MCF 10A (cell line): ENCODE measurements at regions of chr13 and their contacts with region 1.

Region 1: DNA sequence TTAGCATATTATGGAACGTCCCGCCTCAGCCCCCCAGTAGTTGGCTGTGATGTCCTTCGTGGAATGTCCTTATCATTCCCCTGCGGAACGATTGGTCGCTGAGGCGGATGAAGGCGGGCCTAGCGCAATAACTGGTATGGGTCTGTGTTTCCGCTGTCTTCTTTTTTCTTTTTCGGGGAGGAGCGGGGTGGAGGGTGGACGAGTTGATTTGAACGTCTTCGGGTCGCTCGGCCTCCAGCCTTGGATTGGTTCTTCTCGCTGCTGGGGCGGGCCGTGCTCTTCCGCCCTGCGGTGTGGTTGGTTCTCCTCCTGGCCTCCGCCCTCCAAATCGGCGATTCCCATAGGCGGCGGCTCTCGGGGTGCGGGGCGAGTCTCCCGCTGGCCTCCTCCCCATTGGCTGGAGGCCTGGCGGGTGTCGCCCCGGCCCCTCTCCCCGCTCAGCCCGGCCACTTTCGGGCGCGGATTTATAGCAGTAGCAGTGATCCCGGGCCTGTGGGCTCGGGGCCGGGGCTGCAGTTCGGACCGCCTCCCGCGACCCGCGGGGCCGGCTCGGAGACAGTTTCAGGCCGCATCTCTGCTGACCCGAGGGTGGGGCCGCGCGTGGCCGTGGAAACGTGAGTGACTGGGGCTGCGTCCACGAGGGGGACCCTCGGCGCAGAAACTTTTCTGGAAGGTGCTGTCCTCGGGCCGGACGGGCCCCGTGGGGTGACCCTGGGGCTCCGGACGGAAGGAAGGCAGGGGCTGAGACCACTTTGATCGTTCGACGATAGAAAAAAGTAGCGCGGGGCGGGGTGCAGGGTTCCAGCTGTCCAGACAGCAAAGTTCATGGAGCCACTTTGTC is 2.1 kb downstream of the ING1 start:
- DNase-seq: peak; percentile 100
- H3K4me3 Mint-ChIP-seq: peak overlapping the region; percentile 92
- H3K27ac Mint-ChIP-seq: peak overlapping the region; percentile 91
- H3K4me1 Mint-ChIP-seq: no peaks in the 10 kb centered on the region
- H3K27me3 Mint-ChIP-seq: no peaks in the 10 kb centered on the region
- CTCF ChIP-seq: peak; percentile 18

Region 2: GRCh38 chr13:109383670-109384069 is 1331.9 kb before region 1 on chr13:
- CTCF ChIA-PET with region 1: no interaction called
- POLR2A ChIA-PET with region 1: no interaction called
- intact Hi-C with region 1: no loop called
- DNase-seq: peak; percentile 82
- H3K4me3 Mint-ChIP-seq: no peak overlapping the region
- H3K27ac Mint-ChIP-seq: peak overlapping the region; percentile 85
- H3K4me1 Mint-ChIP-seq: peaks cover 26% of the 10 kb centered on the region
- H3K27me3 Mint-ChIP-seq: no peaks in the 10 kb centered on the region
- CTCF ChIP-seq: no peak

Region 3: DNA sequence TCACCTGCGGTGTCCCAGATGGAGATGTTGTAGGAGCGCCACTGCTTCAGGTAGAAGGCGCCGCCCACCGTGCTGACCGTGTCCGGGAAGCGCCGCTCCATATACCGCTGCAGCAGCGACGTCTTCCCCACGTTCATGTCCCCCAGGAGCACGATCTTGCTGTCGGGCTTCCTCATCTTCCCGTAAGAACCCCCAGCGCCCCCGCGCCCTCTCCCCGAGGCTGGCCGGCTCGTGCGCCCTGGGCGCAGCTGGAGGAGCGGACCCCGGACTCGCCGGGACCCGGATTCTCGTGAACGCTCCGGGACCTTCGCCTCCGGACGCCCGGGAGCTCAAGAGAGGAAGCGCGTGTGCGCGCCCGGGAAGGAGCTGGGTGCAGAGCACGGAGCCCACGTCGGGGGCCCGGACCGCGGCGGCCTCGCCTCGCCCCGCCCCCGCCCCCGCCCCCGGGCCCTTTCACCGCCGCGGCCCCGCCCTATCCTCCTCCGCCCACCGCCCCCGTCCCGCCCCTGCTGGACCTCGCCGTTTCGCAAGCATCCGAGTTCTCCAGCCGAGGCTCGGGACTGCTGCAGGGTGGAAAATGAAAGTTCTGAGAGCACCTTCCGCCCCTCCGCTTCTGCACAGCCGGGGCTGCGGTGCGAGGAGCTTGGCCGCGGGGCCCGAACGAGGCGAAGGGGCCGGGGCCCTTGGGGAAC is 154.1 kb before region 1 on chr13 and contains the start of gene RAB20:
- CTCF ChIA-PET with region 1: no interaction called
- POLR2A ChIA-PET with region 1: interaction called, 17 read pairs
- intact Hi-C with region 1: no loop called
- DNase-seq: peak; percentile 87
- H3K4me3 Mint-ChIP-seq: peak within 1 kb of the TSS; percentile 88
- H3K27ac Mint-ChIP-seq: peak within 1 kb of the TSS; percentile 33
- H3K4me1 Mint-ChIP-seq: peaks cover 13% of the 10 kb centered on the region
- H3K27me3 Mint-ChIP-seq: no peaks in the 10 kb centered on the region
- CTCF ChIP-seq: no peak
- total RNA-seq, gene RAB20: 1.7 and 2.8 TPM in 2 replicates

Region 4: GRCh38 chr13:110615322-110616102 is 100.1 kb before region 1 on chr13 and contains the start of gene NAXD:
- CTCF ChIA-PET with region 1: interaction called, 3 read pairs
- POLR2A ChIA-PET with region 1: interaction called, 47 read pairs
- intact Hi-C with region 1: loop called (anchors 1 kb)
- DNase-seq: peak; percentile 96
- H3K4me3 Mint-ChIP-seq: peak within 1 kb of the TSS; percentile 82
- H3K27ac Mint-ChIP-seq: peak within 1 kb of the TSS; percentile 94
- H3K4me1 Mint-ChIP-seq: peaks cover 18% of the 10 kb centered on the region
- H3K27me3 Mint-ChIP-seq: no peaks in the 10 kb centered on the region
- CTCF ChIP-seq: no peak
- total RNA-seq, gene NAXD: 27.7 and 28.3 TPM in 2 replicates

Region 5: DNA sequence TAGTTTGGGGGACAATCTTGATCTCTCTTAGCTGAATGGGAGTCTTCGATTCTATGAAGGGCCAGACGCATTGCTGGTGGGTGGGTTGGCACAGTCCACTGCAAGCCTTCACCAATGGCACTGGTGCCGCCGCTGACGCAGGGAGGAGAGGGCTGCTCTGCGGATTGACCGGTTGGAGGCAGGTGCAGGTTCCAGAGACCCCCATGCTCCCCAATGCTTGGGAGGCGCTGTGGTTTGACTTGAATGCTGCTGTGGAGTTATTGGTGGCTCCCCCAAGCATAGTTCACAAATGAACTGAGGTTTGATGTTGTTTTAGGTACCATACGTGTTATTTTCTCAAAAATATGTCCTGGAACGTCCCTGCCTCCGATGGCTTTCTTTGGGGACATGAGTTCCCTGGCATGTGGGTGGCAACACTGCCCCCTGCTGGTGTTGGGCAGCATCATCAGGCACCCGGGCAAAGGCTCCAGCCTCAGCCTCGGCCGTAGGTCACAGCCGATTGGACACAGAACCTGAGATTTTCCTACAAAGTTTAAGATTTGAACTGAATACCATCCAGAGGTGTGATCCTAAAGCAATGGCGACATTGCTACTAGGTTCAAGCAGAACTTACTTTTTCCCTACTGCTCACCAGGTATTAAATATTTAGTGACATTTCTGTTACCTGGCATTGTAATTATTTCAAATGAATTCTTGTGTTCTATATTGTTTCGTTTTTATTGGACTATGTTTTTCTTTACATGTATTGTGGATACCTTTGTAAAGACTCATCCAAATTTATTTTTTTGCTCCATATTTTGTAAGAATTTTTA is 103.8 kb after region 1 on chr13:
- CTCF ChIA-PET with region 1: interaction called, 5 read pairs
- POLR2A ChIA-PET with region 1: interaction called, 15 read pairs
- intact Hi-C with region 1: loop called (anchors 1 kb)
- DNase-seq: peak; percentile 78
- H3K4me3 Mint-ChIP-seq: no peak overlapping the region
- H3K27ac Mint-ChIP-seq: no peak overlapping the region
- H3K4me1 Mint-ChIP-seq: peaks cover 5% of the 10 kb centered on the region
- H3K27me3 Mint-ChIP-seq: no peaks in the 10 kb centered on the region
- CTCF ChIP-seq: peak; percentile 92

Region 6: DNA sequence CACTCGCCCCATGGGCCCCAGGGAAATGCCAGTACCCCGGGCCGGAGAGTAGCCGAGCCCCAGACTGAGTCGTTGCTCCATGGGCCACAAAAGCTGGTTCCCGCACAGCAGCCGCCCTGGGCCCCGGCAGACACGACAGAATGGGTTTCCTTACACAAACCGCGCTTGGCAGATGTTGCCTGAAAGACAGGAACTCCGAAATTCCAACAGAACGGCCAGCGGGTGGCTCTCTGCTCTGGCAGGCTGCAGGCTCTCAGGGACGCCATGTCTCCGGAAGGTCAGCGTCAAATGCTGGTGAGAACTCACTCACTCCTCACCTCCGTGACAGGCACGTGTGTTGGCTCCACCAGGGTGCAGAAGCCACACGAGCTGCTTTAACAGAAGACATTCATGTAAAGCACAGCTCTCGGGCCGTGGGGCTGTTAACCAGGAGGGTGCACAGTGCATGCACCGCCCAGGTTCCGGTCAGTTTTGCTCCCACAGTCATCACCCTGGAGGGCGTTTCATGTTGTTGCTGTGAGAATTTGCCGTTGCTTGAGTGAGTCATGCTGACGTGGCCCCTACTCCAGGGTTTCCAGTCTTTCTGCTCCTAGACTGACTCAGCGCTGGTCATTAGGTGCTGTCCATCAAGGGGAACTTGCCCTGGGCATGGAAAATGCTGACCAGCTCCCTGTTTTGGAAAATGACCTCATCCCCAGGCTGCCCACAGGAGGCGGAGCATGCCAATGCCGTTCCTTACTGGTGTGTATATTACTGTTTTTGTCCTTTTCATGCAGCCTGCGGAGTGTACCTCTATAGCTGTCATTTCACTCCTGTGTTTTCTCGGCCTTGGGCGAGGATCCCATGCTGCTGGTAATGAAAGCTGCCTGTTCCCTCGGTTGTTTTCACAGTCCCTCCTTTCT is 154.4 kb after region 1 on chr13:
- CTCF ChIA-PET with region 1: no interaction called
- POLR2A ChIA-PET with region 1: interaction called, 14 read pairs
- intact Hi-C with region 1: loop called (anchors 1 kb)
- DNase-seq: peak; percentile 100
- H3K4me3 Mint-ChIP-seq: peak overlapping the region; percentile 62
- H3K27ac Mint-ChIP-seq: peak overlapping the region; percentile 88
- H3K4me1 Mint-ChIP-seq: peaks cover 12% of the 10 kb centered on the region
- H3K27me3 Mint-ChIP-seq: no peaks in the 10 kb centered on the region
- CTCF ChIP-seq: peak; percentile 13

Region 7: DNA sequence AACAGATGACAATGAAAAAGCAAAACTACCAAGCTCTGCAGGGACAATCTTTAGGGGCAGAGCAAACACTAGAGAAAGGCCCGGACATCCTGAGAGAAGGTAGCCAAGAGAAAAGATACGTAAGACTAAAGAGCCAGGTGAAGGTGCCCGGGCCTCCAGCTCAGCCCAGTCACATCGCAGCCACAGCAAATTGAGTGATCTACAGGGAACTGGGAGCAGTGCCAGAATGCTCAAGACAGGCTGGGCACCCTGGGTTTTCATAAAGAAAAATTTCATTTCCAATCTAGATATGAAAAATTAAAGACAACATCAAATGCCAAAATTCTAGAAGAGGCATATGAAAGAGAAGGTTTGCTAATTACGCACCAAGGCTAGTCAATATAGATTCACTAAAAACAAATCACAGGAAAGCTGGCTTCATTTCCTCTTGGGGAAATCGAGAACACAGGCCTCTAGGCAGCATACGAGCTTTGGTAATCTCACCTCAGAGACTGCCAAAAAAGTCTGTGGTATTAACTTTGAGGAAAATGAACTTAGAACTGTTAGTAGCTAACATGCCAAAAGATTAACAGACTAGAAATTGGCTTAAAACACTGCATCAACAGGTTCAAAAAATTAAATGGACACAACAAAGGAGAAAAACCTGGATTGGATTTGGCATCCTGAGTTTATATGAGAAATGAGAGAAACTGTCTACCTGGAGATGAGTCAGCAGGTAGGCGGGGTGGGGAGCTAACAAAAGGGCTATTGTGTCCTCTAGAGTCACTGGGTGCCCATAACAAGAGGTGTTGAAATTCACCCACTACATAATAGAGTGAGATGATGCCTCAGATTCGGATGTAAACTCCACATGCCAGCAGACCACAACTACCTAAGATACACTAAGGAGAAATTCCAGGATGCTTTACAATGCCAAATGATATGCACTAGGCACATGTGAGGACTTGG is 192.6 kb after region 1 on chr13:
- CTCF ChIA-PET with region 1: interaction called, 3 read pairs
- POLR2A ChIA-PET with region 1: interaction called, 38 read pairs
- intact Hi-C with region 1: no loop called
- DNase-seq: peak; percentile 91
- H3K4me3 Mint-ChIP-seq: no peak overlapping the region
- H3K27ac Mint-ChIP-seq: peak overlapping the region; percentile 79
- H3K4me1 Mint-ChIP-seq: peaks cover 43% of the 10 kb centered on the region
- H3K27me3 Mint-ChIP-seq: no peaks in the 10 kb centered on the region
- CTCF ChIP-seq: no peak

Region 8: DNA sequence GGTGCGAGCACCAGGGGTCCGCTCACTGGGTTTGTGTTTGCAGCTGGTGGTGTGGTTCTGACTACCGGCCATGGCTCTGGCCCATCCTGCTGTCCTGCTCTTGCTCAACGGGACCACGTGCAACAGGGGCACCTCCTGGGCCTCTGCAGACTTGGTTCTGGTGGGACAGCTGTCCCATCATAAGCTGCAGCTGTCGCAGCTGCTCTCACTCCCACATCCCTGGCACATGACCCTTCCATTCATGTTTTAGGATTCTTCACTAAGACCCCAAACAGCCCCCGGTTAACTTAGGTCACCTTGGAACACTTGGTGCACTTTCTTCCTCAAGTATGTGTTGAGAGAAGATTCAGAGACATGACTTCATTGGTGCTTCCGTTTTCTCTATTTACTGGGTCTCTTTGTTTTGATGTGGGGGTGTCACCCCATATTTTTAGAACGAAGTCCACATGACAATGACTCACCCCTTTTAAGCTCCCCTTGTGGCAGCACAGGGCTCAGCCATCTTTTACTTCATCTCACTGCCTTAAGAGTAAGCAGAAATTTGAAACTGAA is 331.1 kb after region 1 on chr13:
- CTCF ChIA-PET with region 1: no interaction called
- POLR2A ChIA-PET with region 1: no interaction called
- intact Hi-C with region 1: loop called (anchors 10 kb)
- DNase-seq: no peak
- H3K4me3 Mint-ChIP-seq: no peak overlapping the region
- H3K27ac Mint-ChIP-seq: no peak overlapping the region
- H3K4me1 Mint-ChIP-seq: peaks cover 14% of the 10 kb centered on the region
- H3K27me3 Mint-ChIP-seq: peaks cover 11% of the 10 kb centered on the region
- CTCF ChIP-seq: no peak

Region 9: GRCh38 chr13:111614009-111614408 is 898.4 kb after region 1 on chr13:
- CTCF ChIA-PET with region 1: no interaction called
- POLR2A ChIA-PET with region 1: no interaction called
- intact Hi-C with region 1: no loop called
- DNase-seq: no peak
- H3K4me3 Mint-ChIP-seq: no peak overlapping the region
- H3K27ac Mint-ChIP-seq: no peak overlapping the region
- H3K4me1 Mint-ChIP-seq: no peaks in the 10 kb centered on the region
- H3K27me3 Mint-ChIP-seq: no peaks in the 10 kb centered on the region
- CTCF ChIP-seq: no peak